GM10248 (cell line): ENCODE measurements at regions of chr12 and their contacts with region 1.

Region 1: DNA sequence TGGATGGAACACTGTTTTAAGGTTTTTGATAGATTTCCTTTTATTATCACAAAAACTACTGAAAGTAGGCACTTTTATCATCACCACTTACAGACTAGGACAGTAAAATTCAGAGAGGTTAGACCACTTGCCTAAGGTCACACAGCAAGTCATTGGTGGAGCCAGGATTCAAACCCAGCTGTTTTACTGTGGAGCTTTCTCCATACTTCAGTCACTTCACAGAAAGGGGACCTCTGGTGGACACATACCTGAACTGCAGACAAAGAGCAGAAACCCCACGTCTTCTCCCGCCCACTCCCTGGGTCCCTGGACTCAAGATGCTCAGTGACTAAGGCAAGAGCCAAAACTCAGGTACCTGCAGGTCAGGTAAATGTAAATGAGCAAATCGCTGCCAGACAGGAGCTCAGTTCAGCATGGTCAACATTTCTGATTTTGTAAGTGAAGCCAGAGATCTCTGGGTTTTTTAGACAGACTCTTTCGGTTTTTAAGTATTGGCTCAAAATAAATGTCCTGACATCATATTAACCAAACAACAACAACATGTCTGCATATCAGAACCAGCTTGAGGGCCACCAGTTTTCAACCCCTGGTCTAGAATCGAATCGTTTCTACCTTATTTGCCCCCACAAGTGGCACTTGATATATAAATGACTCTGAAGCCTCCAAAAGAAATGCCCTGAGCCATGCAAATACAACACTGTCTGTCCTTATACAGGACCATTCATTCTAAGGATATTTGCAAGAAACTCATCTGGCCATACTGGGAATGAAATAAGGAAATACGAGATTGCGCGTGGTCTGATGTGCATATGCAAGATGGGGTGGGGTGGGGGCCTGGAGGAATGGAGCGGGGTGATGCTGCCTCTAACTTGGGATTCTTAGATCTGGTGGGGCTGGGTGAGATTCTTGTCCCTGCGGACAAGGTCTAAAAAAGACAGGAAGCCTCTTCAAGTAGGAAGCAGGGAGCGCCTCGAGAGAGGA is 110.9 kb downstream of the KSR2 start:
- DNase-seq: peak; percentile 77
- CTCF ChIP-seq: peak; percentile 51

Region 2: DNA sequence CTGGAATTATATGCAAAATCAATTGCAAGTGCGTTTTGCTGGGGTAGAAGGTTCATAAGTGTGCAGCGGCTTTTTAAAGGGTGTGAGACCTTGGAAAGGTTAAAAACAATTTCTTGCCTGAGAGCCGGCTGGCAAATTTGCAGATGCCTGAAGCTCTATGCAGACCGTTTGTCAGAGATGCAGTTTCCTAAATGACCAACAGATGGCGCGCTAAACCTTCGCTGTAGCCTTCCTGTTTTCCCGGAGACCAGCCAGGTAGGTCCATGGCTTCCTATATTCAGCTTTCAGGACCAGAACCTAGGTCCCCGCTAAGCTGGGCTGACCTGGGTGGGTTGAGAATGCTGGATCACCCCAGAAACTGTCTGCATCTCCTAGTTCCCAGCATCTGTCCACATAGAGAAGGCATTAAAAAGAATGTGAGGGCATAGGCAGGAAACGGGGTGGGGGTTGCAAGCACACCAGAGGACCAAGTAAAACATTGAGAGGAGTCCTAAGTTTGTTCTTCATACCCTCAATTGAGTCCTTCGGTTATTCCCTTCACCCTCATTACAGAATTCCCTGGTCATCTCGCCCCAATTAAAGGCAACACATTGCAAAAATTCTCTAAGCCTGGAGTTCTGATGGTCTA is 490.8 kb before region 1 on chr12:
- CTCF ChIA-PET with region 1: interaction called, 33 read pairs
- POLR2A ChIA-PET with region 1: no interaction called
- DNase-seq: peak; percentile 75
- CTCF ChIP-seq: peak; percentile 79

Region 3: DNA sequence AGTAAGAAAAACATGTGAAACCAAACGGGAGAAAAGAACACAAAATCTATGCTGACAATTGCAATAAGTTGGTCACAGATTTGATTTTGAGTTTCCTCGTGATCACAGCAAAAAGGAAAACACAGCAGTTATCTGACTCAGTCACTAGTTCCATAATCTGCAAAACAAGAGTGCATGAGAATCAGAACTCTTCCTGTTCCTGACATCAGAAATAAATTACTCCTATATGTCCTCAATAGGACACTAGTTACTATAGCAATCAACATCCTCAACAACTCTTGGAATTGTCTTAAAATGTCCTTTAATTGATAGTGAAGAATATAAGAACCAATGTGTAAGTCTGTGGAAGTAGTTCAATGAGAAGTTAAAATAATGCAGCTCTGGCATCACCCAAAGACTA is 228.5 kb before region 1 on chr12:
- CTCF ChIA-PET with region 1: no interaction called
- POLR2A ChIA-PET with region 1: no interaction called
- DNase-seq: no peak
- CTCF ChIP-seq: no peak

Region 4: GRCh38 chr12:117869551-117869950 is 11.6 kb after region 1 on chr12:
- CTCF ChIA-PET with region 1: interaction called, 56 read pairs
- POLR2A ChIA-PET with region 1: no interaction called
- DNase-seq: no peak
- CTCF ChIP-seq: no peak

Region 5: DNA sequence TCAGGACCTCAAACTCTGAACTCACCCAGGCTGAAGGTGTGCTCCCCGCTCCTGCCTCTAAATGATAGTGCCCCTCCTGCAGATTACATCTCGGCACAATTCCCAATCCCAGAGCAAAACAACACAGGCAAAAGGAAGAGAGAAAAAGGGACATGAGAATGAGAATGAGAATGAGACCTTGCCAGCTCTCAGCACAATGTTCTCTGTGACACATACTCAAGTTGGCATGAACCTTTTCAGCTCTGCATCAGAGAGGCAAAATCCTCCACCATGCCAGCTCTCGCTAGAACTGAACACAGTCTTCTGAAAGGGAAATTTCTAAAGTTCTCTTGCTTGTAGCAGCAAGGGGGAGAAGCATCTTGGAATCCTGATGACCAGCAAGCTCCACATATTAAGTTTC is 26.2 kb after region 1 on chr12:
- CTCF ChIA-PET with region 1: interaction called, 12 read pairs
- POLR2A ChIA-PET with region 1: no interaction called
- DNase-seq: no peak
- CTCF ChIP-seq: no peak

Region 6: DNA sequence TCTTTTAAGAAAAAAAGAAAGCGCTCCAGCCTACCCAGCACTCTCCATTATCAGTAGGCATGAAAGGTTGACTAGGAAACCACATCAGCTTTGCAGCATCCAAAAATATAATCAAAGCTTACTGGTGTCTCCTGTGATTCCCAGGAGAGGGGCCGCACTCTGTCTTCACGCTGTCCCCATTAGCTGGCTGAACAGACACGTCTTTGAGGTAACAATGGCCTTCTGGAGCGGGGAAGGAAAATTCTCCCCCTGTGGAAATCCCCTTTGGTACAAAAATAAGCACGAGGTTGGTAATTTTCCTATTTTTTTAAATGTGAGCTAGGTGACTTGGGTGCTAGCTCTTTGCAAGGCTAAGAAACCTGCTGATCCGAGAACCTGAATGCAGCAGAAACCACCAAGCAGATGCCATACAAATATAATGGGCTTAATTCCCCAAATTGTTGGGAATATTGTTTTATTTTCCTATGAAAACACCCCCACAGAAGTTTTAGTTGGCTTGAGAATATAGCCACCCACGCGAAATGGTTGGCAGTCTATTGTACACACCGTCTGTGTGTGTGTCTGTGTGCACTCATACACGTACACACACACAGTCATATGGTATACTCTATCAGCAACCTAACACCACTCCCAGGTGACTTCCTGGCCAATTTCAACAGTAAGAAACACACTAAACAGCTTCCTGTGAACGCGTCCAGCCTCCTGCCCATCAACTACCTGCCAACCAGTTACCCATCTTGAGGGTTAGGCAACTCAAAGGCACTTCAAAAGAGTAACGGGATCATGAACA is 39.6 kb after region 1 on chr12:
- CTCF ChIA-PET with region 1: interaction called, 12 read pairs
- POLR2A ChIA-PET with region 1: no interaction called
- DNase-seq: no peak
- CTCF ChIP-seq: no peak